Heart right ventricle (tissue), 16 donors: ENCODE measurements at regions of chr2 and their contacts with region 1.

Region 1: GRCh38 chr2:101205521-101205998 is 47.1 kb upstream of the CNOT11 start:
- DNase-seq: peak in 1 of 2 donors; percentile 55
- ATAC-seq: peak; percentile 79 to 92 (median 88)
- H3K4me3 ChIP-seq: peak overlapping the region in 8 of 10 donors; percentile 1 to 38 (median 30)
- H3K27ac ChIP-seq: peak overlapping the region in 1 of 10 donors; percentile 65
- H3K4me1 ChIP-seq: peaks cover 0 to 16% (median 0%) of the 10 kb centered on the region in 9 donors
- H3K27me3 ChIP-seq: no peaks in the 10 kb centered on the region
- CTCF ChIP-seq: peak; percentile 13 to 69 (median 56)

Region 2: DNA sequence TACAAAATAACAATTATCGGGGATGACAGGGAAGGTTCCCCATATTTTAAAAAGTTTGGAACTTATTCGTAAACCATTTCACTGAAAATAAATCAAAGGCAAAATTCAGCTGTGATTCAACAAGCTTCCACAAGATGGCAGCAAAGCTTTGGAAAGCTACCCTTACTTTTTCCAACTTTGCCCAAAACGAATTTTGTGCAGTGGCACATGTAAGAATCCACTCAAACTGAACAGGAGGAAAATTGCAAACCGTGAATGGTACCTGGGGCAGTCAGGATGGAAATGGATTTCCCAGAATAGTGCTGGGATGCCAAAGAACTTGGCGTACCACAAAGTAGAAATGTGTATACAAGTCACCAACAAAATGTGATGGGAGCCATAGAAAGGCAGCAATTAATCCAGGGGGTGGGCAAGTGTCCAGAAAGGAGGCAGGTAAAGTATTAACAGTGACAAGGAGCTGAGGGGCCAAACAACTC is 192.8 kb before region 1 on chr2:
- intact Hi-C with region 1: loop called in 9 of 10 experiments (anchors 1 to 10 kb)
- DNase-seq: peak in 1 of 2 donors; percentile 26
- ATAC-seq: no peak
- H3K4me3 ChIP-seq: no peak overlapping the region
- H3K27ac ChIP-seq: no peak overlapping the region
- H3K4me1 ChIP-seq: peaks cover 0 to 8% (median 0%) of the 10 kb centered on the region in 9 donors
- H3K27me3 ChIP-seq: no peaks in the 10 kb centered on the region
- CTCF ChIP-seq: peak; percentile 73 to 91 (median 81)

Region 3: DNA sequence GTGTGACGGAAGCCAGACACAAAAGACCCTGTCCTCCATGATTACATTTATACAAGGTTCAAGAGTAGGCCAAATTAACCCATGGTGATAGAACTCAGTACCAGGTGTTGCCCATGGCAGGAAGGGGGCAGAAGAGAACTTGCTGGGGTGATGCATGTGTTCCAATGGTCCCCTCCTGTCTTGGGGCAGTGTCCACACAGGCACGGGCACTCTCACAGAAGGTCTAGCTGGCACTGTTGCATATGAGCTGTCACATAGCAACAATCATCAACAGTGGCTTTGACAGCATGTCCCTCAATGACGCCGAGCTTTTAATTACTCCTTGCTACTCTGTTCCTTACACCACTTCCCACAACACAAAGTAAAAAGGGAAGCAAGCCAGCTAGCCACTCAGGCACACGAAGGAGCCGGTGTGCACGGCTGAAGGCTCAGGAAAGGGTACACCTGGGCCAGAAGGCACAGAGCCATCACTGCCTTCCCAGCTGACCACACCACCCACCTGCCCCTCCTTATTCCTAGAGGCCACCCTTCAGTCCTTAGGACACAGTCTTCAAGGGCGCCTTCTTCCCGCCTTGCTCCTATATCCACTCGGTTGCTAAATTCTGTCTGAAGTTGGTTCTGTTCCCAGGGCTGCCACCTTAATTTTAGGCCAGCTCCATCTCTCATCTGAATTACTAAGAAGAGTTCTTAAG is 174.6 kb before region 1 on chr2:
- intact Hi-C with region 1: loop called in 2 of 10 experiments (anchors 5 to 10 kb)
- DNase-seq: peak in 1 of 2 donors; percentile 38
- ATAC-seq: peak; percentile 56 to 95 (median 84)
- H3K4me3 ChIP-seq: no peak overlapping the region
- H3K27ac ChIP-seq: peak overlapping the region in 5 of 10 donors; percentile 9 to 51 (median 37)
- H3K4me1 ChIP-seq: peaks cover 0 to 15% (median 0%) of the 10 kb centered on the region in 9 donors
- H3K27me3 ChIP-seq: no peaks in the 10 kb centered on the region
- CTCF ChIP-seq: peak in 4 of 9 donors; percentile 7 to 38 (median 28)

Region 4: GRCh38 chr2:101036562-101037457 is 168.8 kb before region 1 on chr2:
- intact Hi-C with region 1: loop called in 1 of 10 experiments (anchors 10 kb)
- DNase-seq: no peak
- ATAC-seq: no peak
- H3K4me3 ChIP-seq: no peak overlapping the region
- H3K27ac ChIP-seq: no peak overlapping the region
- H3K4me1 ChIP-seq: peaks cover 0 to 27% (median 4%) of the 10 kb centered on the region in 9 donors
- H3K27me3 ChIP-seq: no peaks in the 10 kb centered on the region
- CTCF ChIP-seq: peak in 8 of 9 donors; percentile 13 to 63 (median 52)

Region 5: GRCh38 chr2:101124643-101125366 is 80.8 kb before region 1 on chr2:
- intact Hi-C with region 1: no loop called
- DNase-seq: peak; percentile 53 to 57
- ATAC-seq: peak; percentile 55 to 75 (median 64)
- H3K4me3 ChIP-seq: peak overlapping the region in 3 of 10 donors; percentile 0 to 15 (median 3)
- H3K27ac ChIP-seq: peak overlapping the region; percentile 57 to 89 (median 75)
- H3K4me1 ChIP-seq: peaks cover 25 to 81% (median 60%) of the 10 kb centered on the region in 9 donors
- H3K27me3 ChIP-seq: no peaks in the 10 kb centered on the region
- CTCF ChIP-seq: no peak